Activated CD4-positive, alpha-beta T cell treated with anti-CD3 and anti-CD28 coated beads, Interleukin-2, amount 10 ng/mL, durations not matched to agents 24 days and 14 days (primary cell): ENCODE measurements at regions of chr1 and their contacts with region 1.

Region 1: GRCh38 chr1:208245185-208245705 is 1.1 kb upstream of the PLXNA2 start:
- DNase-seq: peak; percentile 92
- H3K4me3 Mint-ChIP-seq: peak overlapping the region; percentile 73
- H3K27ac Mint-ChIP-seq: no peak overlapping the region
- H3K4me1 Mint-ChIP-seq: peaks cover 10% of the 10 kb centered on the region
- H3K27me3 Mint-ChIP-seq: peaks cover 46% of the 10 kb centered on the region

Region 2: DNA sequence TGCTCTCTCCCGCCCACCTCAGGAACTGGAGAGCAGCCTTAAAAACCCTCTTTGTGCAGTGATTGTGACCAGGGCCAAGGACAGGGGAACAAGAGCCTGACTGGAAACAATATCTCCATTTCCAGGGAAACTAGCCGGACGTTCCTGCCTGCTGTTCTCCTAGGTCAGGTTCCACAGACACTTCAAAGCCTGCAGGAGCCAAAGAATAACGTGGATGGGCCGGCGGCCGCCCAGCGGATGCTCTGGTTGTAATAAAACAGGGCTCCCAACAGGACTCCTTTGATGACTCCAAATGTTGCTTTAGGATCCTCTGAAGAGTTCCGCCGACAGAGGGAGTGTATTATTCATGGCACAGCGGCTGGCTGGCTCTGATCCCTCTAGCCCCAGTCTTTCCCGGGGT is 163.3 kb before region 1 on chr1:
- intact Hi-C with region 1: no loop called
- DNase-seq: no peak
- H3K4me3 Mint-ChIP-seq: no peak overlapping the region
- H3K27ac Mint-ChIP-seq: no peak overlapping the region
- H3K4me1 Mint-ChIP-seq: peaks cover 13% of the 10 kb centered on the region
- H3K27me3 Mint-ChIP-seq: peaks cover 3% of the 10 kb centered on the region

Region 3: DNA sequence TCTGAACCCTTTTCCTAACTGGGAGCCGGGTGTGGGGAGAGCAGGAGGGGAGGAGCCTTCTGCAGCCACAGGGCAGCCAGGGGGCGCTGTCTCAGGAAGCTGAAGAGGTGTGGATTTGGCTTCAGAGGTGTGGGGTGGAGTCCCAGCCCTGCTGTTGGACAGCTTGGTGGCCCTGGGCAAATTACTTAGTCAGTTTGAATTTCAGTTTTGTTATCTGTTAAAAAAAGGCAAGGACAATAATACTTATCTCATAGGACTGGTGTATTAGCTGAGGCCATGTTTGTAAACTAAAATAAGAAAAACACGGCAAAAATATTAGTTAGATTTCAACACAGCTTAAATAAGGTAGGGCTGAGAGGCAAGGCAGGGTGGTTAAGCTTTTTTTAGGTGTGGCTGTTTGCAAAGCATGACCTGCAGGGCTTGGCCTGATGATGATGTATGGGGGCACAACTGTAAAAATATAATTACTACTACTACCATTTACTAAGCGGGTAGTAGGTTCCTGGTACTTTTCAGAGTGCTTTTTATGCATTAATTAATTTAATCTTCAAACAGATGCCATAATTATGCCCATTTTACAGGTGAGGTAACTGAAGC is 112.9 kb before region 1 on chr1:
- intact Hi-C with region 1: loop called (anchors 1 kb)
- DNase-seq: peak; percentile 85
- H3K4me3 Mint-ChIP-seq: no peak overlapping the region
- H3K27ac Mint-ChIP-seq: no peak overlapping the region
- H3K4me1 Mint-ChIP-seq: peaks cover 2% of the 10 kb centered on the region
- H3K27me3 Mint-ChIP-seq: peaks cover 24% of the 10 kb centered on the region